ENCODE measurements at regions of chrX and their contacts with region 1.

Region 1: DNA sequence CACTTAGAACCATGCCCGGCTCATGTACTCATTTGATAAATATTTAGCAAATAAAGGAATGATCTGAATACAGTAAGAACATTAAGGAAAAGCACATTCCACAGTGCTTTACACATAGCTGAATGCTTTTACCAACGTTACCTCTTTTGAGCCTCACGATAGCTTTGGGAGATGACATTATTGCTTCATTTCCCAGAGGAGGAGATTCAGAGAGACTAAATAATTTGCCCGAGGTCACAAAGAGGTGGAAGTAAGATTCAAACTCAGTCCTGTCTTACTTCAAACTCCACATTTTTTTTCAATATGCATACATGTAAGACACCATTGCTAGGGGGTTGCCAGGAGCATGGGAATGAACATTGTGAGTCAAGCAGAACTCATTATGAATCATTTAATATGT is 538.5 kb downstream of the BCOR start:
- DNase-seq: no peak
- H3K4me3 ChIP-seq: no peak overlapping the region
- CTCF ChIP-seq: no peak
- POLR2A ChIP-seq: no peak

Region 2: GRCh38 chrX:39592776-39593175 is 33.5 kb after region 1 on chrX:
- intact Hi-C with region 1: loop called (anchors 1 kb)
- DNase-seq: no peak
- H3K4me3 ChIP-seq: no peak overlapping the region
- CTCF ChIP-seq: no peak
- POLR2A ChIP-seq: no peak

Measured in lower leg skin (tissue), 4 donors.